HepG2 (cell line): ENCODE measurements at regions of chr3 and their contacts with region 1.

Region 1: GRCh38 chr3:161203485-161204098 is 17.5 kb upstream of the NMD3 start:
- DNase-seq: no peak
- ATAC-seq: no peak
- H3K4me3 ChIP-seq: no peak overlapping the region
- H3K27ac ChIP-seq: no peak overlapping the region
- H3K4me1 ChIP-seq: no peaks in the 10 kb centered on the region
- H3K27me3 ChIP-seq: peaks cover 0 to 4% of the 10 kb centered on the region in 2 experiments; a peak in 1 of 5 replicates
- CTCF ChIP-seq: no peak
- EP300 ChIP-seq: no peak
- POLR2A ChIP-seq: no peak
- RAD21 ChIP-seq: no peak

Region 2: GRCh38 chr3:161008063-161008462 is 195.5 kb before region 1 on chr3:
- CTCF ChIA-PET with region 1: no interaction called
- POLR2A ChIA-PET with region 1: no interaction called
- in situ Hi-C with region 1: no loop called
- intact Hi-C with region 1: no loop called
- DNase-seq: no peak
- ATAC-seq: no peak
- H3K4me3 ChIP-seq: no peak overlapping the region
- H3K27ac ChIP-seq: no peak overlapping the region
- H3K4me1 ChIP-seq: no peaks in the 10 kb centered on the region
- H3K27me3 ChIP-seq: no peaks in the 10 kb centered on the region
- CTCF ChIP-seq: no peak
- EP300 ChIP-seq: no peak
- POLR2A ChIP-seq: no peak
- RAD21 ChIP-seq: no peak

Region 3: DNA sequence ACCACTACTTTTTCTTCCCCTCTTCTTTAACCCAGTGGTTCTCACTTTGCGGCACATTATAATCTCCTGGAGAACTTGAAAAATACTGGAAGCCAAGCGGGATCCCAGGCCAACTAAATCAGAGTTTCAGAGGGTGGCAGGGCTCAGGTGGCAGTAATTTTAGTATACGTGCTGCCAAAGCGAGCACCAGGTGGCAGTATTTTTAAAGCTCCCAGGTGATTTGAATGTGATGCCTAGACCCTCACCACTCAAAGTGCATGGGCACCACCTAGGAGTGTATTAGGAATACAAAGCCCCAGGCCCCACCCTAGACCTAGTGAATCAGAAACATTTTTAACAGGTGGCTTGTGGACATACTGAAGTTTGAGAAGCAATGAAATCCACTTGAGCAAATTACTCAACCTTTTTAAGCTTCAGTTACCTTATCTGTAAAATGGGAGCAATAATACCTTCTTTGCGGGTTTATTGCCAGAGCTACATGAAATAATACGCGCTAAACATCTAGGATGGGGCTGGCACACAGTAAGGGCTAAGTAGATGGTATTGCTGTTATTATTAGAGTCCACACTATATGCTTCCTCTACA is 106.7 kb before region 1 on chr3:
- CTCF ChIA-PET with region 1: no interaction called
- POLR2A ChIA-PET with region 1: no interaction called
- in situ Hi-C with region 1: no loop called
- intact Hi-C with region 1: loop called (anchors 10 kb)
- DNase-seq: peak; percentile 38
- ATAC-seq: peak; percentile 78
- H3K4me3 ChIP-seq: no peak overlapping the region
- H3K27ac ChIP-seq: no peak overlapping the region
- H3K4me1 ChIP-seq: peaks cover 10% of the 10 kb centered on the region
- H3K27me3 ChIP-seq: no peaks in the 10 kb centered on the region
- CTCF ChIP-seq: peak; percentile 61
- EP300 ChIP-seq: no peak
- POLR2A ChIP-seq: no peak
- RAD21 ChIP-seq: peak; percentile 43; the same call in 1 of the 2 replicates